ENCODE measurements at regions of chr6 and their contacts with region 1.

Region 1: GRCh38 chr6:119110601-119111548 is 32.4 kb upstream of the FAM184A start:
- DNase-seq: peak; percentile 60
- ATAC-seq: peak; percentile 88
- H3K4me3 Mint-ChIP-seq: no peak overlapping the region
- H3K27ac Mint-ChIP-seq: no peak overlapping the region
- H3K4me1 Mint-ChIP-seq: peaks cover 12% of the 10 kb centered on the region
- H3K27me3 Mint-ChIP-seq: peaks cover 2% of the 10 kb centered on the region
- CTCF ChIP-seq: peak; percentile 62

Region 2: GRCh38 chr6:118283766-118284165 is 827.1 kb before region 1 on chr6:
- CTCF ChIA-PET with region 1: interaction called, 3 read pairs
- POLR2A ChIA-PET with region 1: no interaction called
- intact Hi-C with region 1: loop called (anchors 5 kb)
- DNase-seq: peak; percentile 68
- ATAC-seq: peak; percentile 65
- H3K4me3 Mint-ChIP-seq: no peak overlapping the region
- H3K27ac Mint-ChIP-seq: no peak overlapping the region
- H3K4me1 Mint-ChIP-seq: peaks cover 2% of the 10 kb centered on the region
- H3K27me3 Mint-ChIP-seq: peaks cover 14% of the 10 kb centered on the region
- CTCF ChIP-seq: peak; percentile 85

Region 3: GRCh38 chr6:118963003-118963402 is 147.9 kb before region 1 on chr6:
- CTCF ChIA-PET with region 1: interaction called, 95 read pairs
- POLR2A ChIA-PET with region 1: no interaction called
- intact Hi-C with region 1: loop called (anchors 2 kb)
- DNase-seq: no peak
- ATAC-seq: no peak
- H3K4me3 Mint-ChIP-seq: no peak overlapping the region
- H3K27ac Mint-ChIP-seq: no peak overlapping the region
- H3K4me1 Mint-ChIP-seq: peaks cover 9% of the 10 kb centered on the region
- H3K27me3 Mint-ChIP-seq: no peaks in the 10 kb centered on the region
- CTCF ChIP-seq: peak; percentile 48

Region 4: GRCh38 chr6:118968416-118968815 is 142.5 kb before region 1 on chr6:
- CTCF ChIA-PET with region 1: interaction called, 95 read pairs
- POLR2A ChIA-PET with region 1: no interaction called
- intact Hi-C with region 1: loop called (anchors 2 kb)
- DNase-seq: no peak
- ATAC-seq: no peak
- H3K4me3 Mint-ChIP-seq: no peak overlapping the region
- H3K27ac Mint-ChIP-seq: no peak overlapping the region
- H3K4me1 Mint-ChIP-seq: no peaks in the 10 kb centered on the region
- H3K27me3 Mint-ChIP-seq: no peaks in the 10 kb centered on the region
- CTCF ChIP-seq: no peak

Region 5: DNA sequence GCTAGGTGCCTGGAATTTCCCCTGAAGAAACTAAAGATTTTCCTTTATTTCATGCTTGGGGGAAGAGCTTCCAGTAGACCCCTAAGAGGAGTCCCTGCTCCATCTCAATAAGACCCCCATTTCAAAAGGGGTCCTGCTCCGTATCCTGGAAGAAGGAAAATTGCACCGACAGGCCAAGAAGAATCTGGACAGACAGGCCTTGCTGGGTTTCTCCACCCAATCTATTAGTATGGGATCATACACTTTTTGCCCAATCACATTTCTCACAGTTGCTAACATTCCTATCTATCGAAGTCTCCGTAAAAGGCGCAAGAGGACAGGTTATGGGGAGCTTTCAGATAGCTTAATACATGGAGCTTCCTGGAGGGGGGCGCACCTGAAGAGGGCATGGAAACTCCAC is 11.5 kb before region 1 on chr6:
- CTCF ChIA-PET with region 1: interaction called, 25 read pairs
- POLR2A ChIA-PET with region 1: interaction called, 3 read pairs
- intact Hi-C with region 1: no loop called
- DNase-seq: no peak
- ATAC-seq: no peak
- H3K4me3 Mint-ChIP-seq: no peak overlapping the region
- H3K27ac Mint-ChIP-seq: no peak overlapping the region
- H3K4me1 Mint-ChIP-seq: peaks cover 16% of the 10 kb centered on the region
- H3K27me3 Mint-ChIP-seq: no peaks in the 10 kb centered on the region
- CTCF ChIP-seq: no peak

Region 6: DNA sequence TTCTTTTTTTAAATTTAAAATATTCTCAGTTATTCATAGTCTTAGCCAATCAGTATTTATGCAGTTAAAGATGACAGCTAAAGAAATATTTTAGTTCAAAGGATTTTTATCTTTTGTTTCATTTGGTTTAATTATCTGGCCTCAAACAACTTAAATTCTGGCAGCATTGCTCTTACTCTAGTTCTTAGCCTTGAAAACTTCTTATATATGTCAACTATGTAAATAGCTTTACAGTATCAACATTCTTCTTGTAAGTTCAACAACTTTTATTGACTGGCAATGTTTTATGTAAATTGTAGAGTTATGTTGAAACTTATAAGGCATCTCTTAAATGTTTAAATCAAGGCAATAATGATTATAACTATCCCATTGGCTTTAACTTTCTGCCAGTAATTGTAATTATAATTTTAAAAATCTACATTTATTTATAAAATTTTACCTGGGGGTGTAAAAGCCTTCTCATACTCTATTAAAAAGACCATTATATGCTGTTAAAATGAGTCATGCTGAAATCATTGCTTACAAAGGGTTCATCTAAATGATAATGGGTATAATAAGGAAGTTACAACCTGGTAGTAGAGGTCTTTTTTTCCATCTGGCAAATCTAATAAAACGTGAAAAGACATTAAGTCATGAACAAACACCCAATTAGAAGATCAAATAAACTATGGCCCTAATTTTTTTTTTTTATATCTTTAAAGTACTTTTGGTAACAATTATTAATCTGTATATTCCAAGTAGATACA is 13.4 kb after region 1 on chr6:
- CTCF ChIA-PET with region 1: interaction called, 12 read pairs
- POLR2A ChIA-PET with region 1: no interaction called
- intact Hi-C with region 1: no loop called
- DNase-seq: no peak
- ATAC-seq: no peak
- H3K4me3 Mint-ChIP-seq: no peak overlapping the region
- H3K27ac Mint-ChIP-seq: no peak overlapping the region
- H3K4me1 Mint-ChIP-seq: peaks cover 2% of the 10 kb centered on the region
- H3K27me3 Mint-ChIP-seq: peaks cover 2% of the 10 kb centered on the region
- CTCF ChIP-seq: no peak

Region 7: DNA sequence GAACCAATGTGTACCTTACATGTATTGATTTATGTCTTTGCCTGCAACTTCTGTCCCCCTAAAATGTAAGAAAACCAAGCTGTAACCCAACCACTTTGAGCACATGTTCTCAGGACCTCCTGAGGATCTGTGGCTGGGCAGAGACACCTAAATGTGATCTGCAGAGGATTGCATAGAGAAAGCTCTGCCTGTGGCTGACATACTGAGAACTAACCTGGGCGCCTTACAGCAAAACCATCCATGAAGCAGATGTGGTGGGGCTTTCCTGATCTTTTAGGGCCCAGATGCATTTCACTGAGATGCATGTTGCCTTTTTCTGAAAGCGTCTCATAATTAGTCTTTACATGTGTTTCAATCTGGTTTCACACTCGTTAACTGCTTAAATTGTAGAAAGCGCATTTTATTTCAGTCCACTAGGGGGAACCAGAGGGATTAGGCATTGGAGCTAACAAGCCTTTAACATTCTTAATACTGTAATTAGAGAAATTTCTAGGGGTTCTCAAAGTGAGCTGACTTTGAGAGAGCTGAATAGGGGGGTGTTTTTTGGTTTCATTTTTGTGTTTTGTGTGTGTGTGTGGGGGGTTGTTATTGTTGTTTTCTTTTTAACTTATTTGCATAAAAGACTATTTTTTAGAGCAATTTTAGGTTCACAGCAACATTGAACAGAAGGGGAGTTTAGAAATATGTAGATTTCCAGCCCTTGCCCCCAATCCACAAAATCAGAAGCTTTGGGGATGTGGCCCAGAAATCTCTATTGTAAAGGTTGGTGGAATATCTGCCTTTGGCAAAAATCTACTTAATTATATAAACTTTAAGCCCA is 18.5 kb after region 1 on chr6:
- CTCF ChIA-PET with region 1: interaction called, 12 read pairs
- POLR2A ChIA-PET with region 1: no interaction called
- intact Hi-C with region 1: no loop called
- DNase-seq: peak; percentile 13
- ATAC-seq: peak; percentile 80
- H3K4me3 Mint-ChIP-seq: no peak overlapping the region
- H3K27ac Mint-ChIP-seq: no peak overlapping the region
- H3K4me1 Mint-ChIP-seq: peaks cover 7% of the 10 kb centered on the region
- H3K27me3 Mint-ChIP-seq: peaks cover 2% of the 10 kb centered on the region
- CTCF ChIP-seq: peak; percentile 80

Region 8: GRCh38 chr6:119158057-119158848 is 47.4 kb after region 1 on chr6:
- CTCF ChIA-PET with region 1: no interaction called
- POLR2A ChIA-PET with region 1: no interaction called
- intact Hi-C with region 1: no loop called
- DNase-seq: no peak
- ATAC-seq: no peak
- H3K4me3 Mint-ChIP-seq: no peak overlapping the region
- H3K27ac Mint-ChIP-seq: no peak overlapping the region
- H3K4me1 Mint-ChIP-seq: no peaks in the 10 kb centered on the region
- H3K27me3 Mint-ChIP-seq: peaks cover 3% of the 10 kb centered on the region
- CTCF ChIP-seq: no peak